Activated CD4-positive, alpha-beta T cell treated with anti-CD3 and anti-CD28 coated beads for 36 hours (primary cell): ENCODE measurements at regions of chr6 and their contacts with region 1.

Region 1: DNA sequence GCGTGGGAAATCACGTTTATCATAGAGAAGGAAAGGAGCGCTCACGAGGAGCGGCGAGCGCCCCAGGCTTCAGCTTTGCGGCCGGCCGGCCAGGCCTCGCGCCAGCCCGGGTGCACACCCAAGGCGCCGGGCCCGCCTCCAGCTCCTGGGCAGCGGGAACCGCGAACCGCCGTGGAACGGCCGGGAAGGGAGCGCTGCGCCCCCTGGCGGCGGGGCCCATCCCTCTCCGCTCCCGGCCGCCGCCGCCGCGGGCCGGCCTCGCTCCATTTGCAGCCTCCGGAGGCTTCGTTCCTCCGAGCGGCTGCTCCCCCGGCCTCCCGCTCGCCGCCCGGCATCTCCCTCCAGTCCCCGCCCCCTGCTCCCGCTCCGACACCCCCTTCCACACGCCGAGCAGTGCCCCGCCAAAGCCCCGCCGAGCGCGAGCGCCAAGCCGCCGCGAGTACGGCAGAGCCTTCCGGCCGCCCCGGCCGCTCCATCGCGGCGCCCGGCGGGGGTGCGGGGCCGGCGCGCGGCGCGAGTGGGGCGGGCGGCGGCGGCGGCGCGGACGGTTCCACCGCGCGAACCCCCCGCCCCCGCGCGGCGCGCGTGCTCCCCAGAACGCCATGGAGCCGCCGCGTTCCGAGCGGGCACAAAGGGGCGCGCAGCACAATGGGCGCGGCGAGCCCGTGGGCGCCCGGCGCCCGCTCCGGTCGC is 956 bp downstream of the BEND3 start:
- DNase-seq: peak; percentile 84
- ATAC-seq: peak; percentile 62
- H3K4me3 Mint-ChIP-seq: peak overlapping the region; percentile 67
- H3K27ac Mint-ChIP-seq: peak overlapping the region; percentile 65
- H3K4me1 Mint-ChIP-seq: peaks cover 21% of the 10 kb centered on the region
- H3K27me3 Mint-ChIP-seq: peaks cover 5% of the 10 kb centered on the region

Region 2: DNA sequence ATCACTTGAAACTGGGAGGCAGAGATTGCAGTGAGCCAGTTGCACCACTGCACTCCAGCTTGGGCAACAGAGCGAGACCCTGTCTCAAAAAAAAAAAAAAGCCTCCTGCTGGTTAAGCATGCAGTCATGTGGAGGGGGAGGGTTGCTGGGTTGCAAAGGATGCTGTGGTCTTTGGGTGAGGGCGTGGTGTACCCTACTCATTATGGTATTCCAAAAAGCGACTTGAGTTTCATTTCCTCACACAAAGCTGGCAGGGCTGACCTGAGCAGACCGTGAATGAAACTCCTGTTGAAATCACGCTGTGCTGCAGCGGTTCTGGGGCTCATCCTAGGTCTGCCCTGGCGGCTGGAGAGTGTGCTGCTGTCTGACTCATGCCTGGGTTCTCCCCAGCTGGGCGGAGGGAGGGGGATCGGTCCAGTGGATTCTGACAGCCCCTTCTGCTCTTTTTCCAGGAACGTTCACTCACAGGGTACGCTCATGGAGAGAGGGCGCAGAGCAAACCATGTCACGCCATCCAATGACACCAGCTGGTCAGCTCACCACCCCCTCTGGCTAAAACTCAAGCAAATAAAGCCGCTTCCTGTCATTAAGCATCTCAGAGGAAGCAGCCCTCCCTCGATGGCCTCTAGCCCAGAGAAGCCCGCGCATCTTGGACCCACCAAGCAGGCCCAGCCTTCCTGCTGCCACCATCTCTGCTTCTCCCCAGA is 543.5 kb after region 1 on chr6:
- CTCF ChIA-PET with region 1: no interaction called
- POLR2A ChIA-PET with region 1: no interaction called
- intact Hi-C with region 1: loop called in 1 of 2 experiments (anchors 5 kb)
- DNase-seq: peak; percentile 81
- ATAC-seq: peak; percentile 99
- H3K4me3 Mint-ChIP-seq: peak overlapping the region; percentile 8
- H3K27ac Mint-ChIP-seq: no peak overlapping the region
- H3K4me1 Mint-ChIP-seq: peaks cover 27% of the 10 kb centered on the region
- H3K27me3 Mint-ChIP-seq: no peaks in the 10 kb centered on the region